ENCODE measurements at regions of chr7 and their contacts with region 1.

Region 1: DNA sequence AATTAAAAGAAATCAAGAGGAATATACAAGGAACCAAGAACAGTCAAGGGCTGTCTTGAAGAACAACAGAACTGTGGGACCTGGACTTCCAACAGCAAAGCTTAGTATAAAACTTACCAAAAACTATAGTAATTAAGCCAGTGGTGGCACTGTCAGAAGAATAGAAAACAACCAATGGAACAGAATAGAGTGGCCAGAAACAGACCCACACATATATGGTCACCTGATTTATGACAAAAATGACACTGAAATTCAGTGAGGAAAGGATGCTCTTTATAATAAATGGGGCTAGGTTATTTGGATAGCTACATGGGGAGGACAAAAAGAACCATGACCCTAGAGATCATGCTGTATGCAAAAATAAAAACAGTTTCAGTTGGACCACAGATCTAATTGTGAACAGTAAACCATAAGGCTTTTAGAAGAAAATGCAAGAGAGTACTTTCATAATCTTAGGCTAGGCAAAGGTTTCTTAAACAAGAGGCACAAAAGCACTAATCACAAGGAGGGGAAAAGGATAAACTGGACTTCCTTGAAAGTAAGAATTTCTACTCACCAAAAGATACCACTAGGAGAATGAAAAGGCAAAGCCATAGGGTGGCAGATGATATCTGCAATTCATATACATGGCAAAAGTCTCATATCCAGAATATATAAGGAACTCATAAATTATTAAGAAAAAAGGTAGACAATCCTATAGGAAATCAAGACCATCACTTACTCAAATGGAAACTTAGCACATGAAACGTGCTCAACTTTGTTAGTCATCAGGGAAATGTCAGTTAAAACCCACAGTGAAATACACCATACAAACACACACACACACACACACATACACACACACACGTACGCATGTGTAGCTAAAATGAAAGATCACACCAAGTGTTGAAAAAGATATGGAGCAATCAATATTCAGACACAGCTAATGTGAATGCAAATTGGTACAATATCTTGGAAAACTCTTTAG is 20.8 kb downstream of the HYCC1 start:
- DNase-seq: peak; percentile 54
- H3K4me3 ChIP-seq: peak overlapping the region; percentile 40
- H3K27ac ChIP-seq: peak overlapping the region; percentile 94
- H3K4me1 ChIP-seq: peaks cover 80% of the 10 kb centered on the region
- CTCF ChIP-seq: no peak

Region 2: GRCh38 chr7:22885797-22886261 is 107.3 kb before region 1 on chr7:
- CTCF ChIA-PET with region 1: no interaction called
- POLR2A ChIA-PET with region 1: interaction called, 4 read pairs
- intact Hi-C with region 1: loop called (anchors 2 kb)
- DNase-seq: peak; percentile 92
- H3K4me3 ChIP-seq: peak overlapping the region; percentile 30
- H3K27ac ChIP-seq: peak overlapping the region; percentile 39
- H3K4me1 ChIP-seq: peaks cover 18% of the 10 kb centered on the region
- CTCF ChIP-seq: no peak

Region 3: DNA sequence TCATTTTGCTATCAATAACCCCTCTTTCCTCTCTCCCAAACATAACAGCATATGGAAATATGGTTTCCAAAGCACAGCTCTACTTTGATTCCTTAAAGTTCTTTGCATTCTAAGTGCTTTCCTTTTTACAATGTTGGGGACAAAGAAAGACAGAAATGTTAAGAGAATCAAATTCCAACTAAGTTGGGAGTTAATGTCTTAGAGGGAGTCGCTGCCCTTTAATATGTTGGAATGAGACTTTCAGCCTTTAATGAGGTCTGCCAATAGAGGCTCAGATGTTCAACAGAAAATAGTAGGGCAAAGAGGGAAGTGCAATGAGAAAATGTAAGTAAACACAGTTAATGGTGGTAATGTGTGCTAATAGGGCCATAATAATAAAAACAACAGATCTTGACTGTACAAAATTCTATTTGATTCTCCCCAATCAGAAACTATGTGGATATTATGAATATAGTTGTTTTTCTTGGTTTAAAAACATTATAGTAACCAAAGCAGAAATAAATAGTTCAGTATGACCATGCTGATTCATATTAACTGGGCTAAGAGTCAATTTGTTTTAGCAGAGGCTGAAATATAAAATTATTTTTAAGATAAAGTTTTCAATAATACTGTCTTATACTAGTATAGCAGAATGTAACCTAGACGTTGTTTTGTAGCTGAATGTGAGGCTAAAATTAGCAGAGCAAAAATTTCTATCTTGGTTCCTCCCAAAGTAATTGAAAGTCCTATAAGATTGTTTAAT is 10.5 kb after region 1 on chr7:
- CTCF ChIA-PET with region 1: no interaction called
- POLR2A ChIA-PET with region 1: interaction called, 24 read pairs
- intact Hi-C with region 1: no loop called
- DNase-seq: no peak
- H3K4me3 ChIP-seq: no peak overlapping the region
- H3K27ac ChIP-seq: no peak overlapping the region
- H3K4me1 ChIP-seq: peaks cover 50% of the 10 kb centered on the region
- CTCF ChIP-seq: no peak

Region 4: DNA sequence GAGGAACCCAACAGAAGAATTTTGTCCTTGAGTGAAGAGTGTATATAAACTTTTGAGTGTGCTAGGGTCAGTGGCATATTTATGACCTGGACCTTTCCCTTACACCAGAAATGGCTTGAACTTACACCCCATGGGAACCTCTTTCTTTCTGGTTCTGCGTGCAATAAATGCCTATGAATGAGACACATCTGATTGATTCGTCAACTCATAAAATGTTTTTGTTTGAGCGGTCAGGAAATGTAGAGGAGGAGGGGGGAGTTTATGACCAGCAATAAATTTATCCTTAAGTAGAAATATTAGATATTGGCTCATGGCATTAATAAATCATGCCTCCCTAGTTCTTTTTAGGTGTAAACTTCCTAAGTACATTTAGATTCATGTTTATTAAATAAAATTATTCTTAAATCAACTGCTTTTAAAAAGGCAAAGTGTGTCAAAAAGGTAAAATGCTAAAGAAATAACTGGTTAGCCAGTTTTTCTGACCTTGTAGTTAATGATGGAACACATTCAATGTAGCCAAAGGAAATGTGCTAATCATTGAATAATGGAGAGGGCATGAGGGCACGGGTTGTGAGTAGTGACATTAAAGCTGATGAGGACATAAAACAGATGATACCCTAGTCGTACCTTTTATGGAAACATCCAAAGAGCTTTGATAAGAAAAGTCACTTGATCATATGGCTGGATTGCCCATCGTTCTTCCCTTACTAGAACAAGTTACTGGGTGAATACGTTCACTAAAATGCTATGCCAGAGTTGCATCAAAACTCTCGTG is 175.1 kb after region 1 on chr7:
- CTCF ChIA-PET with region 1: no interaction called
- POLR2A ChIA-PET with region 1: no interaction called
- intact Hi-C with region 1: no loop called
- DNase-seq: no peak
- H3K4me3 ChIP-seq: no peak overlapping the region
- H3K27ac ChIP-seq: no peak overlapping the region
- H3K4me1 ChIP-seq: no peaks in the 10 kb centered on the region
- CTCF ChIP-seq: no peak

Measured in OCI-LY7 (cell line).